Activated CD8-positive, alpha-beta T cell treated with anti-CD3 and anti-CD28 coated beads for 36 hours (primary cell): ENCODE measurements at regions of chr15 and their contacts with region 1.

Region 1: DNA sequence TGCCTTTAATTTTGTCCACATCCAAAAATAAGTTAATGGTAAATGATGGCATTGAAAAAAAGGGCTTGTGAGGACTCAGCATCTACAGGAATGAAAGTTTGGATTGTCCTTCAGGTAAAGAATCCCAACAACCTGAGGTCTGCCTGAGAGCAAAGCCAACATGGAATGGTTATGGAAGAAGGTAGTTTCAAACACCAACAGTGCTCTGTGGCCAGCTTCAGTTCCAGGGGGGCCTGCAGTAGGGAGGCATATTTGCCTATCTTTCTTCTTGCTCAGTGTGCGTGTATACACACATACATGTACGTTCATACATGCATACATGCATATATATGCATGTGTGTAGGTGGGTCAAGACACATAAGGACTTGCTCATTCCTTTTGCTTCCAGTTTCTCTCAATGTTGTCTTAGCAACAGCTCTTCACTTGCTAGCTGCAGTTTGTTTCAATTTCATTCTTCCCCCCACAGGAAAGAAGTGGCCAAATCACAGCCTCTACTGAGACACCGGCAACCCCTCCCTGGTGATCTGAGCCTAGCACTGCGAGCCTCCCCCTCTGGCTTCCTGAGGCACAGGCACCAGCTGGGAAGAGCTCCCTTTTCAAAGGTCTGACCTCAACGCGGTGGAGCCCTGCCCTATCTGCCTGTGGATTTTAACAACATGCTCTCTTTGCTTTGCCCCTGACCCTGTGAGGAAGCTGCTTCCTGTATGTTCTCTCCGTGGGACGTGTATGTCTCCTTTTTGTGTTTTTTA is 146.2 kb downstream of the KLF13 start:
- DNase-seq: peak; percentile 76
- ATAC-seq: peak; percentile 87
- H3K4me3 Mint-ChIP-seq: peak overlapping the region; percentile 65
- H3K27ac Mint-ChIP-seq: peak overlapping the region; percentile 90
- H3K4me1 Mint-ChIP-seq: peaks cover 63% of the 10 kb centered on the region
- H3K27me3 Mint-ChIP-seq: no peaks in the 10 kb centered on the region
- CTCF ChIP-seq: no peak

Region 2: DNA sequence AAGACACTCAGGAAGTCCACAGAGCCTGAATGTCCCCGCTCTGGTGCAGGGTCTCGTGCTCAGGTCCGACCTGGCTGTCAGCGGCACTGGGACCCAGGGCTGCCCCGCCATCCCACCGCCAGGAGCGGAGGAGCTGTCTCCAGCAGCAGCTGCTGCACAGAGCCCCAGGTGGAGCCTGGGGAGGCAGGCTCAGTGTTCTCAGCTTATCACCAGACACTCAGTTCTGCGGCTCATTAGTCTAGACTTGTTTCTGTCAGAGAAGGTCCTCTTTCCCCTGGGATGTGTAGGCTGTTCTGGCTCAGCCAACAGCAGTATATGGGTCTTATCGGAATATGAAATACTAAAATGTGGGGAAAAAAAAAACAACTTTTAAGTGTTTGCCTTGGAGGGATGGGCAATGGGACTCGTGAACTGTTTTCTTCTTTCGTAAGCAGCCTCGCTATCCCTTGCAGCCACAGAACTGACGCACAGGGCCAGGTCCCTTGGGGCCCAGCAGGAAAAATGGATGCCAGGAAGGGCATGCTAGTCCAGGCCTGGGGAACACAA is 70.2 kb before region 1 on chr15:
- CTCF ChIA-PET with region 1: no interaction called
- POLR2A ChIA-PET with region 1: no interaction called
- intact Hi-C with region 1: no loop called
- DNase-seq: no peak
- ATAC-seq: no peak
- H3K4me3 Mint-ChIP-seq: no peak overlapping the region
- H3K27ac Mint-ChIP-seq: no peak overlapping the region
- H3K4me1 Mint-ChIP-seq: peaks cover 61% of the 10 kb centered on the region
- H3K27me3 Mint-ChIP-seq: no peaks in the 10 kb centered on the region
- CTCF ChIP-seq: no peak

Region 3: GRCh38 chr15:31440754-31441311 is 32.0 kb before region 1 on chr15:
- CTCF ChIA-PET with region 1: interaction called, 85 read pairs
- POLR2A ChIA-PET with region 1: interaction called, 35 read pairs
- intact Hi-C with region 1: no loop called
- DNase-seq: peak; percentile 61
- ATAC-seq: peak; percentile 8
- H3K4me3 Mint-ChIP-seq: peak overlapping the region; percentile 66
- H3K27ac Mint-ChIP-seq: peak overlapping the region; percentile 71
- H3K4me1 Mint-ChIP-seq: peaks cover 73% of the 10 kb centered on the region
- H3K27me3 Mint-ChIP-seq: no peaks in the 10 kb centered on the region
- CTCF ChIP-seq: no peak

Region 4: DNA sequence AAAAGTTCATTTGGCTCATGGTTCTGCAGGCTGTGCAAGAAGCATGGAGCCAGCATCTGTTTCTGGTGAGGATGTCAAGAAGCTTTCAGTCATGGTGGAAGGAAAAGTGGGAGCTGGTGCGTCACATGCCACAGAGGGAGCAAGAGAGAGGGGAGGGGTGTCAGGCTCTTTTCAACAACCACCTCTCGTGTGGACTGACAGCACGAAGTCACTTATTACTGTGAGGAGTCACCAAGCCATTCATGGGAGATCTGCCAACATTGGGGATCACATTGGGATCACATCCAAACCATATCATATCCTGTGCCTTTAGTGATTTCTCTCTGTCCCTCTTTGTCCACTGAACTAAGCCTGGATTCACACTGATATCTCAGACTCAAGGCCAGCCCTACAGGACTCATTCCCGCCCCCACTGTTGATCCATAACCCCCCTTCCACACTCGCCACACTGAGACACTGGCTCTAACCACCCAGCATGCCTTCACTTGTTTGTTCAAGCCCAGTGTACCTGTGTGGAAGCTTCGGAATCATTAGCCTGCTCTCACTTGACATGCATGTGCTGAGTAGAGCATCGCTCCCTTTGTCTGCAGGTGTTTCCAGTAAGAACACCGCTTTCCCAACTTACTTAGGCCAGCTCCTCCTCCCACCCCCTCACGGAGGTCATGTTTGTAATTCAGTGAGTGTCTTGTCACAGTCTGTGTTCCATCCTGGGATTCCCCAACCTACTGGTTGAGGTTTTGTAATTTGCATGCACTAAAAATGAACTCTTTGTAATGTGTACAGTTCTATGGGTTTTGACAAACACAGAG is 14.0 kb before region 1 on chr15:
- CTCF ChIA-PET with region 1: interaction called, 8 read pairs
- POLR2A ChIA-PET with region 1: interaction called, 22 read pairs
- intact Hi-C with region 1: no loop called
- DNase-seq: peak; percentile 80
- ATAC-seq: peak; percentile 98
- H3K4me3 Mint-ChIP-seq: peak overlapping the region; percentile 12
- H3K27ac Mint-ChIP-seq: peak overlapping the region; percentile 81
- H3K4me1 Mint-ChIP-seq: peaks cover 28% of the 10 kb centered on the region
- H3K27me3 Mint-ChIP-seq: no peaks in the 10 kb centered on the region
- CTCF ChIP-seq: no peak

Region 5: DNA sequence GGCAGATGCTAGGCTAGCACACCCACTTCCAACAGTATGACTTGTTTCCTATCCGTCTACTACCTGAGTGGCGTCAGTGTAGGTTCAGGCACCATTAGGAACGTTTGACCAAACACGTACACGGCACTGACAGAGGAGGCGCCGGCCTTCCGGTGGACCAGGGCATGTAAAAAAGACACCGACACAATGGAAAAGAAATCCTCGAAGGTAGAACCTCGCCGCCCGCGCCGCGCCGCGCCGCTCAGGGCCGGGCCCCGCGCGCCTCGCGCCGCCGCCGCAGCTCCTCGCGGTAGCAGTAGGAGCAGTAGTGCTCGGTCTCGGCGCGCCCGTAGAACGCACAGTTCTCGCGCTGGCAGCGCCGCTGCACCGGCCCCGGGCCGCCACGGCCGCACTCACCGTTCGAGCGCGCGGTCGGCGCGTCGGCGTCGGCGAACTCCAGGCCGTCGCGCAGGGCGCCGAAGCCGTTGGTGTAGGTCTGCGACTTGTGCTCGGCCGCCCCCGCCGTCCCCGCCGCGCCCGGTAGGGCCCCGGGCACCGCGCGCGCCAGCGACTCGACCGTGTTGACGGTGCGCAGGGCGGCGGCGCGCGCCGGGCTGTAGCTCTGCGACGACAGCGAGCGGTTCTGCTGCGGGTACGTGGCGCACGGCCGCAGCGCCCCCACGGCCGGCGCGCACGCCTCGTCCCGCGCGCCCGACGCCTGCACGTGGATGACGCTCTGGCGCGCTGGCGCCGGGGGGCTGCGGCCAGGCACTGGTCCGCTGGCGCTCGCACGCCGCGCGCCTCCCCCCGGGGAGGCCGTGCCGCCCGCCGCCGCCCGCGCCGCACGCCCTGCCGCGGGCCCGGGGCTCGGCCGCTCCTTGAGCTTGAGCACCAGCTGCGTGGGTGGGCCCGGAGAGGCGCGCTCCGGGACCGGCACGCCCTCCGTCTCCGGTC is 10.5 kb after region 1 on chr15:
- CTCF ChIA-PET with region 1: interaction called, 104 read pairs
- POLR2A ChIA-PET with region 1: interaction called, 29 read pairs
- intact Hi-C with region 1: no loop called
- DNase-seq: peak; percentile 85
- ATAC-seq: peak; percentile 80
- H3K4me3 Mint-ChIP-seq: peak overlapping the region; percentile 82
- H3K27ac Mint-ChIP-seq: peak overlapping the region; percentile 95
- H3K4me1 Mint-ChIP-seq: peaks cover 65% of the 10 kb centered on the region
- H3K27me3 Mint-ChIP-seq: no peaks in the 10 kb centered on the region
- CTCF ChIP-seq: no peak

Region 6: DNA sequence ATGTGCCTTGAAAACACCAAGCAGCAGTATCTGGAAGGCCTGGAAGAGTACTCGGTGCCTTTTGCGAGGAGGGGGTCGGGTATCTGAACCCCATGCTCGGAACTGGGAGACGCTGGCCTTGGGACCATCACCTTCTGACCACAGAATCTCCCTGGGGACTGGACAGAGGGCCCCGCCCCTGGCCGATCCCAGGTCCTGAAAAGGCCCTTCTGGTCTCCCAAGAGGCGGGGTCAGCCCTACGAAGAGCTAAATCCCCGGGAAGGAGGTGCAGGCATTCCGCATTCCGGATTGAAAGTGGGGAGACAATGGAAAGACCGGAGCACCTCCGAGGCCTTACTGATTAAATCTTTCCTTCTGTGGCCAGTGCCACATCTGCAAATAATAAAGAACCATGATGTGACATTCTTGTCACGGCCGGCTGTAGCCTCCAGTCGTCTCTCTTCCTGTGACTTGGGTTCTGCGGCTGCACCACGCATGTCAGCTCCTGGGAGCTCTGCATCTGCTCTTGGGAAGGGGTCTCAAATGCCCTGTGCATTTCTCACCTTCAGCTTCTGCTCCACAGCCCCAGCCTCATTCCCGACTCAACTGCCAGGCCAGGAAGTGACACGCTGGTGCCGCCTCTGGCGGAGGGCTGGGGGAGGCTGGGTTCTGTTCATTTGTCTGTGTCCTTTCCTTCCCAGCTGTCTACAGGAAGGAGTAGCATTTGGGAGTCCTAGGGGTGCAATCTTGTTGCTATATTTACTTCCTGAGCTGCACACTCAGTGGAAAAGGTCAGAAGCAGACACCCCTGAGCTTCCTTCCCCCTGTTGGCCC is 27.3 kb after region 1 on chr15:
- CTCF ChIA-PET with region 1: no interaction called
- POLR2A ChIA-PET with region 1: no interaction called
- intact Hi-C with region 1: no loop called
- DNase-seq: no peak
- ATAC-seq: no peak
- H3K4me3 Mint-ChIP-seq: no peak overlapping the region
- H3K27ac Mint-ChIP-seq: no peak overlapping the region
- H3K4me1 Mint-ChIP-seq: peaks cover 5% of the 10 kb centered on the region
- H3K27me3 Mint-ChIP-seq: no peaks in the 10 kb centered on the region
- CTCF ChIP-seq: no peak